Posterior cingulate gyrus (tissue), 11 donors: ENCODE measurements at regions of chr10 and their contacts with region 1.

Region 1: DNA sequence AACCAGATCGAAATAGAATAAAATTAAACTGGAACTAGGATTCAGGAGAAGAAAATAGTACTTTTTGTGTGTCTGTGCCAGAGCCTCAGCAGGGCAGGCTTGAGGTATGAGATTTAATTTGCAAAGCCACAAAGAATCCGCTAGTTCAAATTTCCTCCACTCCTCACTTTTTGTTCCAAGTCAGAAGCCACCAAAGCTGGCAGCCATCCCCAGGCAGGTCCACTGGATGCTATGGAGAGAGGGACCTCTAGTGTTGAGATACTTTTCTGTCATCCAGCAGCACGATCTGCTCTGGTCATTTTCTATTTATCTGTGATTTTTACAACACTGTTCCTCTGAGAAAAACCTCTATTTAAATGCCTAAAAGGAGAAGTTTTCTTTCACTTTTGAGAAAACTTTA is 147.9 kb upstream of the FRMD4A start:
- DNase-seq: peak; percentile 67 to 97 (median 78)

Region 2: DNA sequence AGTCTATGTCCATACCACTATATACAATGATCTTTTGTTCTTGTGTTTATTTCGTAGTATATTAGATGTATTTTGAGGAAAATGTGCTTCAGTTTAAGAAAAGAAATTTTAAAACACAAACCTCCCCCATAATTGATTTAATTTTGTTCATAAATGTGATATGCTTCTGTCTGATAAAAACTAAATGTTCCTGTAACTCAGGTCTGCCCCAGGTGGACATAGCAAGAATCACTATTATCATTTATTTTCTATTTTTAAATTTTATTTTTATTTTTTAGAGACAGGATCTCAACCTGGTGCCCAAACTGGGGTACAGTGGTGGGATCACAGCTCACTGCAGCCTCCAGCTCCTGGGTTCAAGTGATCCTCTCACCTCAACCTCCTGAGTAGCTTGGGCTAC is 993.0 kb before region 1 on chr10:
- intact Hi-C with region 1: no loop called
- DNase-seq: no peak

Region 3: GRCh38 chr10:14200698-14201544 is 277.7 kb before region 1 on chr10:
- intact Hi-C with region 1: loop called (anchors 1 kb)
- DNase-seq: peak in 2 of 10 donors; percentile 13 to 72

Region 4: GRCh38 chr10:14385596-14386593 is 92.7 kb before region 1 on chr10:
- intact Hi-C with region 1: loop called (anchors 2 kb)
- DNase-seq: peak in 1 of 10 donors; percentile 65

Region 5: DNA sequence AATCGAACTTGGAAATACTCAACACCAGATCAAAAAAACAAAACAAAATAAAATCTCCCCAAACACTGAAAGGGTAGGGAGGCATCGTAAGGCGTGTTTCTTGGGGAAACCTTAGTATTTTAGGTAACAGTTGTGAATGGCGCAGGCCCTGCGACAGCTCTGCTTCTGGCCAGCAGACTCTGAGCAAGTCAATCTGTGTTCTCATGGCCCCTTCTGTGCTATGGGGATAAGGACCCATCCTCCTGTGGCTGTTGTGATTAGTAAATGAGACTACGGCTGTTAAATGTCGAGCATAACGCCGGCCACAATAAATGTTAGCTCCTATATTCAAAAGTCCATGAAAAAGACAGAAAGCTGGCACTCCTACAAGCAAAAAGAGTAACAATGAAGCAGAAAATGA is 645.6 kb after region 1 on chr10:
- intact Hi-C with region 1: no loop called
- DNase-seq: no peak